Ovary (tissue), 10 donors: ENCODE measurements at regions of chr1 and their contacts with region 1.

Region 1: GRCh38 chr1:154558575-154559465 is at the start of gene UBE2Q1:
- DNase-seq: peak; percentile 99 to 100 (median 99)
- H3K4me3 ChIP-seq: peak within 1 kb of the TSS; percentile 94
- H3K27ac ChIP-seq: peak within 1 kb of the TSS; percentile 58 to 75
- H3K4me1 ChIP-seq: peaks cover 9% of the 10 kb centered on the region
- H3K27me3 ChIP-seq: no peaks in the 10 kb centered on the region
- CTCF ChIP-seq: peak in 1 of 3 donors; percentile 24
- EP300 ChIP-seq: peak; percentile 90
- POLR2A ChIP-seq: peak; percentile 22
- total RNA-seq, gene UBE2Q1: 14.3 to 72.4 (median 58.5) TPM

Region 2: GRCh38 chr1:154404984-154405761 is 153.6 kb before region 1 on chr1 and contains the start of gene IL6R:
- intact Hi-C with region 1: loop called in 1 of 4 experiments (anchors 10 kb)
- DNase-seq: peak; percentile 89 to 96 (median 91)
- H3K4me3 ChIP-seq: peak within 1 kb of the TSS; percentile 69
- H3K27ac ChIP-seq: peak within 1 kb of the TSS; percentile 89 to 96
- H3K4me1 ChIP-seq: peaks cover 17% of the 10 kb centered on the region
- H3K27me3 ChIP-seq: no peaks in the 10 kb centered on the region
- CTCF ChIP-seq: peak; percentile 39 to 79 (median 72)
- EP300 ChIP-seq: peak; percentile 88
- POLR2A ChIP-seq: peak; percentile 90
- total RNA-seq, gene IL6R: 7.5 to 37.0 (median 12.9) TPM

Region 3: GRCh38 chr1:154863315-154864174 is 304.7 kb after region 1 on chr1:
- intact Hi-C with region 1: loop called in 1 of 4 experiments (anchors 10 kb)
- DNase-seq: peak in 1 of 5 donors; percentile 9
- H3K4me3 ChIP-seq: no peak overlapping the region
- H3K27ac ChIP-seq: no peak overlapping the region
- H3K4me1 ChIP-seq: no peaks in the 10 kb centered on the region
- H3K27me3 ChIP-seq: no peaks in the 10 kb centered on the region
- CTCF ChIP-seq: no peak
- EP300 ChIP-seq: no peak
- POLR2A ChIP-seq: no peak

Region 4: DNA sequence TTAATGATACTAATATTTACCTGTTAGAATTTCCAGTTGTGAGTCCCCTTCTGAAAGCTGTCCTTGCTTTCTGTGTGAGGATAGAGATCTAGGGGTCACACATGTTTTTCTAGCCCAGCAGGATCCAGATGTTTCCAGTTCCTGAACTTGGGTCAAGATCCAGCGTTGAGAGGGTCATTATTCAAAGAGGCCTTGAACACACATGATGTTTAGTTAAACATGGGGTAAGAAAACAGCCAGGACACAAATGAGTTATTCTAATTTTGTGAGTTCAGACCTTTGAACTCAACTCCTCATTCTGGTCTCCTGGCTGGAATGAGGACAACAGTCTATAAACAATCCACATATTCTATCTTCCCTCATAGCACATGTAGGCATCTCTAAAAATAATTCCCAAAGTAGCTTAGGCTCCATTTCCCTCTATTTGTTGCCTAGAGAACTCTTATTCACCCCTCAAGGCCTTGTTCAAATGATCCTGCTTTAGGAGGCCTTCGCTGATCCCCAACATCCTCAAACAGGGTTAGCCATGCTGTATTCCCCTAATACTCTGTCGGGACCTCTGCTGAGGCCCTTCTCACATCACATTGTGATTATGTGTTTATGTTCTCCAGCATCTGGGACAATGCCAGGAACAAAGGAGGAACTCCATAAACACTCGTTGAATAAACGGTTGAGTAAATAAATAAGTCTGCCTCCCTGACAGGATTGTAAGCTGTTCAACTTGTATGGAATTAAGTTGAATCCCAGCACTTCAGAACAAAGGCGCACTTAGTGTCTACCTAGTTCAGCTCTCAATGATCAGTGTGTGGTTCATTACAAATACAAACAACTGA is 326.3 kb after region 1 on chr1:
- intact Hi-C with region 1: loop called in 1 of 4 experiments (anchors 5 kb)
- DNase-seq: no peak
- H3K4me3 ChIP-seq: no peak overlapping the region
- H3K27ac ChIP-seq: no peak overlapping the region
- H3K4me1 ChIP-seq: peaks cover 3% of the 10 kb centered on the region
- H3K27me3 ChIP-seq: no peaks in the 10 kb centered on the region
- CTCF ChIP-seq: no peak
- EP300 ChIP-seq: no peak
- POLR2A ChIP-seq: no peak

Region 5: DNA sequence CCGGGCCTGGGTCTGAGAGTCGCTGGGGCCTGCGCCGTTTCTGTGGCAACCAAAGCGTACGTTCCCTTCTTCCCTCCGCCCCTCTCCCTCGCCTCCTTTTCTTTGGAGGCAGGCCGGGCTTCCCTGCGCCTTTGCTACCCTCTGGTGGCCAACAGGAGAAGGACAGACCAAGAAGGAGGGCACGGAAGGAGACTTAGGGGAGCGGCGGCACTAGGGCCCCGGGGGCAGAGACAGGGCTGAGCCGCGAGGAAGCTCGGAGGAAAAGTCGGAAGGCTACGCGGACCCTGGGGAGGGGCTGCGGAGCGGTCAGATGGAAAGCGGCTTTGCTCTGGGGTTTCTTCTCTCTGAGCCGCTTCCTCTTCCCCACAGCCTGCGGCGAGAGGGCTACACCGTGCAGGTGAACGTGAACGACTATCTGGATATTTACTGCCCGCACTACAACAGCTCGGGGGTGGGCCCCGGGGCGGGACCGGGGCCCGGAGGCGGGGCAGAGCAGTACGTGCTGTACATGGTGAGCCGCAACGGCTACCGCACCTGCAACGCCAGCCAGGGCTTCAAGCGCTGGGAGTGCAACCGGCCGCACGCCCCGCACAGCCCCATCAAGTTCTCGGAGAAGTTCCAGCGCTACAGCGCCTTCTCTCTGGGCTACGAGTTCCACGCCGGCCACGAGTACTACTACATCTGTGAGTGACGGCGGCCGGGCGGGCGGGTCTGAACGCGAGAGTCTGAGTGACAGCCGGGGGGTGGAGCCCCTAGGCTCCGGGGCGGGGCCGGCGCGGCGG is 526.1 kb after region 1 on chr1:
- intact Hi-C with region 1: loop called in 1 of 4 experiments (anchors 10 kb)
- DNase-seq: peak; percentile 86 to 92 (median 90)
- H3K4me3 ChIP-seq: peak overlapping the region; percentile 61
- H3K27ac ChIP-seq: peak overlapping the region; percentile 66 to 69
- H3K4me1 ChIP-seq: peaks cover 14% of the 10 kb centered on the region
- H3K27me3 ChIP-seq: peaks cover 16% of the 10 kb centered on the region
- CTCF ChIP-seq: peak; percentile 92 to 98 (median 97)
- EP300 ChIP-seq: no peak
- POLR2A ChIP-seq: peak; percentile 10